MCF 10A (cell line): ENCODE measurements at regions of chr1 and their contacts with region 1.

Region 1: GRCh38 chr1:183622884-183623785 is 12.4 kb downstream of the ARPC5 start:
- DNase-seq: peak; percentile 86
- H3K4me3 Mint-ChIP-seq: no peak overlapping the region
- H3K27ac Mint-ChIP-seq: peak overlapping the region; percentile 65
- H3K4me1 Mint-ChIP-seq: peaks cover 35% of the 10 kb centered on the region
- H3K27me3 Mint-ChIP-seq: no peaks in the 10 kb centered on the region
- CTCF ChIP-seq: peak; percentile 97

Region 2: DNA sequence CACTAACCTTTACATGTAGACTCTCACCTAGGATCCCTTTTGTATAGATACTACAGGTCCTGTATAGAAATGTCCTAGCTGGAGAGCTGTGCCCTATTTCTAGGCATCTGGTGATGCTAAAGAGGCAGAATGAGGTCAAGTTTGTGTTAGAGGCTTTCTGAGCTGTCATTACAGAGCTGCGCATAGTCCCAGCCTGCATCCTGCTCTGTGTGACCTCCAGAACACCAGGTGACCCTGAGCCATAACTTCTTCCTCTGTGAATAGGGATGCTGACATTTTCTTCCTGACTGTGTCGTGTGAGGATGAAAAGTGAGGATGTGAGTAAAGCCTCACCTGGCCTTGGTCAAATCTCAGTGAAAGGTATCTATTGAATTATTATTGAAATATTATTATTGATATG is 1297.8 kb before region 1 on chr1:
- CTCF ChIA-PET with region 1: no interaction called
- POLR2A ChIA-PET with region 1: no interaction called
- intact Hi-C with region 1: no loop called
- DNase-seq: no peak
- H3K4me3 Mint-ChIP-seq: no peak overlapping the region
- H3K27ac Mint-ChIP-seq: no peak overlapping the region
- H3K4me1 Mint-ChIP-seq: peaks cover 4% of the 10 kb centered on the region
- H3K27me3 Mint-ChIP-seq: no peaks in the 10 kb centered on the region
- CTCF ChIP-seq: no peak

Region 3: GRCh38 chr1:183318433-183318832 is 304.7 kb before region 1 on chr1:
- CTCF ChIA-PET with region 1: interaction called, 3 read pairs
- POLR2A ChIA-PET with region 1: no interaction called
- intact Hi-C with region 1: loop called (anchors 1 kb)
- DNase-seq: peak; percentile 95
- H3K4me3 Mint-ChIP-seq: no peak overlapping the region
- H3K27ac Mint-ChIP-seq: peak overlapping the region; percentile 60
- H3K4me1 Mint-ChIP-seq: peaks cover 26% of the 10 kb centered on the region
- H3K27me3 Mint-ChIP-seq: no peaks in the 10 kb centered on the region
- CTCF ChIP-seq: peak; percentile 79

Region 4: GRCh38 chr1:183484254-183484653 is 138.9 kb before region 1 on chr1:
- CTCF ChIA-PET with region 1: no interaction called
- POLR2A ChIA-PET with region 1: interaction called, 3 read pairs
- intact Hi-C with region 1: loop called (anchors 1 kb)
- DNase-seq: peak; percentile 33
- H3K4me3 Mint-ChIP-seq: no peak overlapping the region
- H3K27ac Mint-ChIP-seq: no peak overlapping the region
- H3K4me1 Mint-ChIP-seq: peaks cover 51% of the 10 kb centered on the region
- H3K27me3 Mint-ChIP-seq: no peaks in the 10 kb centered on the region
- CTCF ChIP-seq: peak; percentile 40

Region 5: GRCh38 chr1:183554577-183554976 is 68.6 kb before region 1 on chr1:
- CTCF ChIA-PET with region 1: interaction called, 4 read pairs
- POLR2A ChIA-PET with region 1: no interaction called
- intact Hi-C with region 1: loop called (anchors 1 kb)
- DNase-seq: no peak
- H3K4me3 Mint-ChIP-seq: no peak overlapping the region
- H3K27ac Mint-ChIP-seq: no peak overlapping the region
- H3K4me1 Mint-ChIP-seq: no peaks in the 10 kb centered on the region
- H3K27me3 Mint-ChIP-seq: no peaks in the 10 kb centered on the region
- CTCF ChIP-seq: no peak

Region 6: DNA sequence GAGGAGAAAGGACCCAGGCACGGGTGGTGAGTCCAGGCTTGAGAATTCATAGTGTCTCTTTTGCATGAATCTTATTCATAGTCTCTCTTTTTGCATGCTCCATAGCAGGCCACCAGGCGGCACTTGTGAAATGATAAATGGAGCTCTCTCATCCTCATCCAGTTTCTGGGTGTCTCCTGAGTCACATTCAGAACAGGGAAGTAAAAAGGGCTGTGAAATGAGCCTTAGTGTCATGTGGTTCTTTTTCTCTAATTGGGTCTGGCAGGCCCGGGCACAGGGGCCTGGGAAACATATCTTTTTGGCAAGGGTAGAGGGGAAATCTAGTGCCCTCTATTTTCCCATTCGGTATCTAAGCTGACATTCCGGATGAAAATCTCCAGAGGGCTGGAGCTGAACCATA is 13.8 kb before region 1 on chr1:
- CTCF ChIA-PET with region 1: interaction called, 33 read pairs
- POLR2A ChIA-PET with region 1: interaction called, 25 read pairs
- intact Hi-C with region 1: loop called (anchors 1 kb)
- DNase-seq: peak; percentile 87
- H3K4me3 Mint-ChIP-seq: peak overlapping the region; percentile 38
- H3K27ac Mint-ChIP-seq: peak overlapping the region; percentile 99
- H3K4me1 Mint-ChIP-seq: peaks cover 31% of the 10 kb centered on the region
- H3K27me3 Mint-ChIP-seq: no peaks in the 10 kb centered on the region
- CTCF ChIP-seq: peak; percentile 69

Region 7: DNA sequence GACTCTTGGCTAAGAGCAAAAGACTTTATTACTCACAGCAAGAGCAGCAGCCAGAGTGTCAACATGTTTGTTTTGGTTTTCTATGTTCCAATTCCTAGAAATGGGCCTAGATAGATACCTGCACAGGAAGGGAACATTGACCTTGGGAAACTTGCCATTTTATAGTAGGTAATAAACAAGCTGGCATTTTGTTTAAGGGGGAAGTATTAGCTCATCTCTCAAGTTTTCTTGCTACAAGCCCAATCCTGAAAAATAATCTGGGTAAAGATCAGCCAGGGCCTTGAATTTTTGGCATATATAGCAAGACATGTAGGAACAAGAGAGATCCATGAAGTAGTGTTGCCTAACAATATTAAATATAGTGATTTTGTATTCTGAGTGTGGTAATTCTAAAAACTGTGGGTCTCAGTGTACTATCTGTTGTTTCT is 130.3 kb after region 1 on chr1:
- CTCF ChIA-PET with region 1: no interaction called
- POLR2A ChIA-PET with region 1: no interaction called
- intact Hi-C with region 1: no loop called
- DNase-seq: peak; percentile 83
- H3K4me3 Mint-ChIP-seq: no peak overlapping the region
- H3K27ac Mint-ChIP-seq: peak overlapping the region; percentile 73
- H3K4me1 Mint-ChIP-seq: peaks cover 29% of the 10 kb centered on the region
- H3K27me3 Mint-ChIP-seq: no peaks in the 10 kb centered on the region
- CTCF ChIP-seq: no peak